Panc1 (cell line): ENCODE measurements at regions of chr14 and their contacts with region 1.

Region 1: DNA sequence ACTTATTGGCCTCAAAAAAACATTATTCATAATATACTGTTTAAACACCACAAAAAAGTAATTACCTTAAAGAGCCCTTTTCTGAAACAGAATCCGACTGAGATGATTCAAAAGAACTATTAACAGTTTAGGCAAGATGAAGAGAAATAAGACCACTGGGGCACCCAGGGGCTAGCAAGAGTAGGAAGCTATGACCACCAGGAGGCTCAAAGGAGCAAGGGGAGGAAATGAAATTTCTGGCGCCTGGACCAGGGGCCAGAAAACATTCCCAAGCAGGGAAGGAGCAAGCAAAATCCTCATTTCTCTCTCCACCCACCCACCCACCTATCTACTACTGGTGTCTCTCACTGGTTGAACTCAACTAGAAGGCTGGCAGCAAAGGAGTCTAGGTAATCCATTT is 6.2 kb upstream of the DCAF4 start:
- DNase-seq: no peak
- ATAC-seq: no peak
- H3K4me3 ChIP-seq: no peak overlapping the region
- H3K27ac ChIP-seq: no peak overlapping the region
- H3K4me1 ChIP-seq: no peaks in the 10 kb centered on the region
- H3K27me3 ChIP-seq: 0 out of 2 replicates have a peak, but pooled peaks cover 2% of the 10 kb centered on the region
- CTCF ChIP-seq: no peak

Region 2: DNA sequence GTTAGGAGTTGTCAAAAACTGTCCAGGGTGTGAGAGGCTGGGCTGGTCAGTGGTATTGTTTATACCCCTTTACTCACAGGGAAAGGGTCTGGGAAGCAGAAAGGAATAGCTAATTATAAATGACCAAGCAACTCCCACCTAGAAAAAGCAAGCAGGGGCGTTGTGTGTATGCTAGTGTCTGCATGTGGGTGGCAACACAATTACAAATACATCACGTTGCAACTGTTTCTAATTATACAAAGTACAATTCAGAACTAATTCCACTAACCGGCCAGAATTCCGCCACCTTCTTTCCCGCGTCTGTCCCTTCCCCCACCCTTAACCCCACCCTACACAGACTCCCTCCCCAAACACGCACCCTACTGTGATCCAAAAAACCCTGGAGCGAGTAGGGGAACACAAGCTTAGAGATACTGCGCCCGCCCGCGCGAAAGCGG is 28.3 kb before region 1 on chr14:
- CTCF ChIA-PET with region 1: no interaction called
- POLR2A ChIA-PET with region 1: interaction called, 11 read pairs
- in situ Hi-C with region 1: no loop called
- intact Hi-C with region 1: no loop called
- DNase-seq: no peak
- ATAC-seq: no peak
- H3K4me3 ChIP-seq: peak overlapping the region; percentile 55 to 67
- H3K27ac ChIP-seq: no peak overlapping the region
- H3K4me1 ChIP-seq: peaks cover 7% of the 10 kb centered on the region; the same call in 1 of the 2 replicates
- H3K27me3 ChIP-seq: peaks cover 30% of the 10 kb centered on the region
- CTCF ChIP-seq: no peak

Region 3: DNA sequence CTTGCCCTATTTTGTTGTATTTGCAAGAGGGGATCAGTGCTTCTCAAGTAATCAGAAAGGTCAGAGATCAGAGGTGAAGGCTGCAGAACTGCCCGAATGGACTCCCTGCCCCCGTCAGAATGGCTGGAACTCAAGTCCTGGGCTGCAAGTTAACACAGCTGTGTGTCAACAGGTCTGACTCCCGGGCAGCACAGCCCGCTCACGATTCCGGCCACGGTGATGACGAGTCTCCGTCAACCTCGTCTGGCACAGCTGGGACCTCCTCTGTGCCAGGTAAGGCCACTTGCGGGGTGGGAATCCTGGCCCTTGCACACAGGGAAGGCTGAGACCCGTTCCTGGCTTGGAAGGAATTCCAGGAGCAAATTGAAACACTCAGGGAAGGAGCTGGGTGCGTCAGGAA is 19.6 kb after region 1 on chr14:
- CTCF ChIA-PET with region 1: no interaction called
- POLR2A ChIA-PET with region 1: interaction called, 16 read pairs
- in situ Hi-C with region 1: no loop called
- intact Hi-C with region 1: no loop called
- DNase-seq: no peak
- ATAC-seq: no peak
- H3K4me3 ChIP-seq: no peak overlapping the region
- H3K27ac ChIP-seq: no peak overlapping the region
- H3K4me1 ChIP-seq: no peaks in the 10 kb centered on the region
- H3K27me3 ChIP-seq: no peaks in the 10 kb centered on the region
- CTCF ChIP-seq: no peak